Activated CD4-positive, alpha-beta T cell treated with anti-CD3 and anti-CD28 coated beads, Interleukin-2, amount 10 ng/mL, durations not matched to agents 7 days and 5 days (primary cell): ENCODE measurements at regions of chr17 and their contacts with region 1.

Region 1: DNA sequence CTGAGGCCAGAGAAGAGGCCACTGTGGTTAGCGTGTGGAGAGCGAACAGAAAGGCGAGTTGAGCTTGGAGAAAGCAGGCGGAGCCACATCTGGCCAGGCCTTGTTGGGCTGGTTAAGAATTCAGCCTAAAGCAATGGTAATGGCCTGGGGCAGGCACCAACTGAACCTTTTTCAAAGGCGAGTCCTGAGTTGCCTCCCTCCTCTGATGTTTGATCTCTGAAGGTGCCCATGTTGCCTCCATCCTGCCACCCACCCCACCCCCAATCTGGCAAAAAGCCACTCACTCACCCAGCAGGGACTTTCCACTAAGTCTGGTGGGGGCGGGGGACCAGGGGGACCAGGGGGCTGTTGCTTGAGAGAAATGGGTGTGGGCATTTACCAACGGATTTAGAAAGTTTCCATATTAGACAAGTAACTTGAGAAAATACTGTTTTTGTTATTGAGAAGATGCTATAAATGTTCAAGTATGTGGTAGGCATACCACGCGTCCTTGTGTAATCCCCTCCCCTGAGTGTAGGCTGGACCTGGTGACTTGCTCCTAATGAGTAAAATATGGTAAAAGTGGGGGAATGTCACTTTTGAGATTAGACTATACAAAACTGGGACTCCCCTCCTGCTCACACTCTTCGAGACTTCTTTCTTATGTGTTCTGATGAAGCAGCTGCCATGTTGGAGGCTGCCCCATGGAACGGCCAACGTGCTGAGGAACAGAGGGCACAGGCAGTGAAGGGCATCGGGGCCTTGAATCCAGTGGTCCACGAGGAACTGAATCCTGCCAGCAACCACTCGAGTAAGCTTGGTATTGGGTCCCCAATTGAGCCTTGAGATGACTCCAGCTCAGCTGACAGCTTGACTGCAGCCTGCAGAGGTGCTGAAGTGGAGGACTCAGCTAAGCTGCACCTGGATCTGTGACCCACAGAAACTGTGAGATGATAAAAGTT is 29.9 kb upstream of the TNS4 start:
- DNase-seq: peak; percentile 59
- H3K4me3 Mint-ChIP-seq: peak overlapping the region; percentile 11
- H3K27ac Mint-ChIP-seq: peak overlapping the region; percentile 90
- H3K4me1 Mint-ChIP-seq: peaks cover 88% of the 10 kb centered on the region
- H3K27me3 Mint-ChIP-seq: peaks cover 2% of the 10 kb centered on the region

Region 2: GRCh38 chr17:40433551-40434415 is 97.5 kb before region 1 on chr17:
- CTCF ChIA-PET with region 1: interaction called, 11 read pairs
- POLR2A ChIA-PET with region 1: no interaction called
- DNase-seq: peak; percentile 42
- H3K4me3 Mint-ChIP-seq: no peak overlapping the region
- H3K27ac Mint-ChIP-seq: no peak overlapping the region
- H3K4me1 Mint-ChIP-seq: peaks cover 17% of the 10 kb centered on the region
- H3K27me3 Mint-ChIP-seq: peaks cover 4% of the 10 kb centered on the region

Region 3: GRCh38 chr17:40474419-40475002 is 56.8 kb before region 1 on chr17:
- CTCF ChIA-PET with region 1: interaction called, 23 read pairs
- POLR2A ChIA-PET with region 1: interaction called, 6 read pairs
- DNase-seq: no peak
- H3K4me3 Mint-ChIP-seq: no peak overlapping the region
- H3K27ac Mint-ChIP-seq: peak overlapping the region; percentile 41
- H3K4me1 Mint-ChIP-seq: peaks cover 44% of the 10 kb centered on the region
- H3K27me3 Mint-ChIP-seq: no peaks in the 10 kb centered on the region

Region 4: DNA sequence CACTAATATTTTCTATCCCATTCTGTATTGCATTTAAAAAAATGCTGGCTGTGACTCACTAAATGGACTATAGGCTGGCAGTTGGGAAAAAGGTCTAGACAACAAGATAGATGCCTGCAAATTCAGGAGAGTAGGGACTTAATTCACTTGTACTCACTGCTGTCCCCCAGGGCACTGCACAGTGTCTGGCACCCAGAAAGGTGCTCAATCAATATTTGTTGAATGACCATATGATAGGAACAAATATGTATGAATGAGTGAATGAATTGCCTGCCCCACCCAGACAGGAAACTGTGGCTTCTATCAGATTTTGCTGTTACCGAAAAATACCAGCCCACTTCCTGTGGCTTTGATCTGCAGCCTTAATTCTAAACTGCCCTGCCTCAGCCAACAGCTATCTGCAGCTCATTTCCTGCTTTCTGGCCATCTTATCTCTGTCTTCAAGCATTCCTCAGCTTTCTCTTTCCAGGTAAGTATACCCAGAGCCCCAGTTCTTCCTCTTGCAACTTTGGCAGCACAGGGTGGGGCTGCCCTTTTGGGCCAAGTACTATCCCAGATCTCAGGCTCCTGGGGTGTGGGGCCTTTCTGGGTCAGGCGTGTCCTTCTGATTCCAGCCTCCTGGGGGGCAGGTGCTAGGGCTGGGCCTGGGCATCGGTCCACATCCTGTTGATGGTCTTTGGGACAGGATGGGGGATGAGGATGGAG is 14.6 kb before region 1 on chr17:
- CTCF ChIA-PET with region 1: interaction called, 17 read pairs
- POLR2A ChIA-PET with region 1: interaction called, 5 read pairs
- DNase-seq: peak; percentile 90
- H3K4me3 Mint-ChIP-seq: peak overlapping the region; percentile 73
- H3K27ac Mint-ChIP-seq: peak overlapping the region; percentile 94
- H3K4me1 Mint-ChIP-seq: peaks cover 78% of the 10 kb centered on the region
- H3K27me3 Mint-ChIP-seq: no peaks in the 10 kb centered on the region

Region 5: DNA sequence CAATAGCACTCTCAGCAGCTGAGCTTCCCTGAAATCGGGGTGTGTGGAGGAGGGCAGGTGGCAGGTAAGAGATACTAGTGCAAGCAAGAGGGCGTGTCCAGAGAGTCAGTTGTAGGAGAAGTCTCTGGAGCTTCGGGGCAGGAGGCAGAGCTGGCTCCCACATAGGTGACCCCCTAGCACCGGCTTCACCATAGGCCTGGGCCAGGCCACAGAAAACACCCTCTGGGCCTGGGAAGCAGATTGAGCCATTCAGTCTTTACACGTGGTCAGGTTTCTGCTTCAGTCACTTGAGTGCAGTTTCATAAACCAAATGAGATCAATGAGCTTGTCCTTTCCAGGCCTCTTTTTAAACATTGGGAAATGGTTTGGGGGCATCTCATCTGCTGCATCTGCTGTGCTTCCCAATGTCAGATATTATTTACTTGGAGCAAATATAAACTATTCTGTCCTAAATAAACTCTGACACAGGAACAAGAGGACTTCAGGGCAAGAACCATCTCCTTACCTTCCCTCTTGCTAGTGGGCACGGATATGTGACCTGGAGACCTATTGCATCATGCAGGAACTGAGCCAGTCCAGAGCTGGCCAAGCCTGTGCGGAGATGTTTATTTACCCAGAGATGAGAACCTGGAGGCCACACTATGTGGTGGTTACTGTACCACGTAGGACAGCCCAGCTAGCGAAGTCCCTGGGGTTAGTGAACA is 17.8 kb after region 1 on chr17:
- CTCF ChIA-PET with region 1: interaction called, 317 read pairs
- POLR2A ChIA-PET with region 1: no interaction called
- DNase-seq: peak; percentile 18
- H3K4me3 Mint-ChIP-seq: no peak overlapping the region
- H3K27ac Mint-ChIP-seq: peak overlapping the region; percentile 88
- H3K4me1 Mint-ChIP-seq: peaks cover 91% of the 10 kb centered on the region
- H3K27me3 Mint-ChIP-seq: no peaks in the 10 kb centered on the region

Region 6: DNA sequence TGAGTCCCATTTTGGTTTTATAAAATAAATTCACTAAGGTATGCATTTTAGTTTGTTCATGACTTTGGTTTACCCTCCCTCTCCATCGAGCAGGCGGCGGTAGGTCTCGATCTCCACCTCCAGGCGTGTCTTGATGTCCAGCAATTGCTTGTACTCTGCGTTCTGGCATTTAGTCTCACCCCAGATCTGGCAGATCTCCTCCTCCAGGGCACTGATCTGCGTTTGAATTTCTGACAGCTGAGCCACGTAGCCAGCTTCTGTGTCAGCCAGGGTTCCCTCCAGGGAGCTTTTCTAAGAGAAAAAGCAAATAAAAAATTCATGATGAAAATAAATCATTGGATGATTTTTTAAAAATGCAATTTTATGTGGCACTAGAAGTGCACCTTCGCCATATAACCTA is 168.1 kb after region 1 on chr17:
- CTCF ChIA-PET with region 1: no interaction called
- POLR2A ChIA-PET with region 1: no interaction called
- DNase-seq: no peak
- H3K4me3 Mint-ChIP-seq: no peak overlapping the region
- H3K27ac Mint-ChIP-seq: no peak overlapping the region
- H3K4me1 Mint-ChIP-seq: no peaks in the 10 kb centered on the region
- H3K27me3 Mint-ChIP-seq: peaks cover 33% of the 10 kb centered on the region